ENCODE measurements at regions of chr4 and their contacts with region 1.

Region 1: DNA sequence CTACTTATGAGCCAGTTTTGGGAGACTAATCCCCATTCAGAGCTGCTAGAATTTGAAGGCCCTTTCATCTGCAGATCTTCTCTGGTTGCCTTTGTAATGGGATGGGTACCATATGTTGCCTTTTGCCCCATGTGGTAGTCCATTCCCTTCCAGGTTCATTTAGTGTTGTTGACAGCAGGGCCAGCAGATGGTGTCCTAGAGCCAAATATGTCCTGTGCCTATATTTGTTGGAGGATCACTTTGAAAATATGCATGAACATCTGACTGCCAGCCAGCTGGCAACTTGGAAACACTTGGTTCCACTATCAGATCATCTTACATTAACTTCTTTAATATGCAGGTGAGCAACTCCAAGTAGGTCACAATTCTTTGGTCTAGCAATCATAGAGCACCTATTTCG is 30.4 kb downstream of the CFAP299 start:
- DNase-seq: peak; percentile 37 to 40
- ATAC-seq: peak; percentile 62 to 95
- H3K4me3 ChIP-seq: no peak overlapping the region
- H3K27ac ChIP-seq: no peak overlapping the region
- H3K4me1 ChIP-seq: peaks cover 4 to 5% of the 10 kb centered on the region in 2 donors
- H3K27me3 ChIP-seq: no peaks in the 10 kb centered on the region
- CTCF ChIP-seq: peak in 3 of 5 experiments; percentile 16 to 47 (median 44)
- POLR2A ChIP-seq: no peak

Region 2: DNA sequence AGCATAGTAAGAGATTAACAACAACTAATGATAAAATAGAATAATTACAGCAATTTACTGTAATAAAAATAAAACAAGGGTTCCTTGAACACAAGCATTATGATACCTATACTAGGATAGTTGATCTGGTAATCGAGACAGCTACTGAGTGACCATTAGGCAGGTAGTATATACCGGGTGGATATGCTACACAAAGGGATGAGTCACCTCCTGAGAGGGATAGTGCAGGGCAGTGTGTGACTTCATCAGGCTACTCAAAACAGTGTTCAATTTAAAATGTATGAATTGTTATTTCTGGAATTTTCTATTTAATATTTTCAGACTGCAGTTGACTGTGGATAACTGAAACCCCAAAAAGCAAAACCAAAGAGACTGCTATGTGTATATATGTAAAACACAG is 283.2 kb before region 1 on chr4:
- in situ Hi-C with region 1: no loop called
- intact Hi-C with region 1: no loop called
- DNase-seq: no peak
- ATAC-seq: no peak
- H3K4me3 ChIP-seq: no peak overlapping the region
- H3K27ac ChIP-seq: no peak overlapping the region
- H3K4me1 ChIP-seq: no peaks in the 10 kb centered on the region
- H3K27me3 ChIP-seq: no peaks in the 10 kb centered on the region
- CTCF ChIP-seq: no peak
- POLR2A ChIP-seq: no peak

Region 3: DNA sequence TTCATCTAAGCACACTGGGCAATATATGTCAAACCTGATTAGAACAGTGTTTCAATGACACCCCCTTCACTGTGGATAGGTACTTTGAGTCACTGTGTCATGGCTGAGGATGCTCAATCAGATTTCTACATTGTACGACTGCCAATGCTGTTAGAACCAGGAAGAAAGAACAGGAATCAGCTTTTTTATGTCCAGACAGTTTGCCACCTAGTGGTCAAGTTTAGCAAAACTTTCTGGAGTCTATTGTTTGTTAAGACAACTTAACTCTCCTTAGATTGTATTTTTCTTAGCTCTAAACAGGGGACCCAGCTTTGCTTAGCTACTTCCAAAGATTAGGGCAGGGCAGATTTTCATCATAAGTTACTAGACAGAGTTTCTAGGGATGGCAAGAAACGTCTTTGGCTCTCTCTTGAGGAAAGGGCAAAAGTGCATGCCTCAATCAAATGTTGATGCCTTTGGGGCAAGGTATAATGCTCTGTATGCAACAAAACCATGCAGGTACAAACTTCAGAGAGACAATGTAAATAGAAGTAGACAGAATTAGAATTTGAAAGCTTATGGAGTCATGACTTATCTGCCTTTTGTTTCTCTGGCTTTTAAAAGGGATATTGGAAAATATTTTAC is 624.1 kb after region 1 on chr4:
- in situ Hi-C with region 1: loop called (anchors 5 to 25 kb)
- intact Hi-C with region 1: loop called (anchors 1 kb)
- DNase-seq: no peak
- ATAC-seq: peak in 1 of 2 donors; percentile 9
- H3K4me3 ChIP-seq: no peak overlapping the region
- H3K27ac ChIP-seq: no peak overlapping the region
- H3K4me1 ChIP-seq: no peaks in the 10 kb centered on the region
- H3K27me3 ChIP-seq: no peaks in the 10 kb centered on the region
- CTCF ChIP-seq: peak in 3 of 5 experiments; percentile 19 to 63 (median 54)
- POLR2A ChIP-seq: no peak

Region 4: DNA sequence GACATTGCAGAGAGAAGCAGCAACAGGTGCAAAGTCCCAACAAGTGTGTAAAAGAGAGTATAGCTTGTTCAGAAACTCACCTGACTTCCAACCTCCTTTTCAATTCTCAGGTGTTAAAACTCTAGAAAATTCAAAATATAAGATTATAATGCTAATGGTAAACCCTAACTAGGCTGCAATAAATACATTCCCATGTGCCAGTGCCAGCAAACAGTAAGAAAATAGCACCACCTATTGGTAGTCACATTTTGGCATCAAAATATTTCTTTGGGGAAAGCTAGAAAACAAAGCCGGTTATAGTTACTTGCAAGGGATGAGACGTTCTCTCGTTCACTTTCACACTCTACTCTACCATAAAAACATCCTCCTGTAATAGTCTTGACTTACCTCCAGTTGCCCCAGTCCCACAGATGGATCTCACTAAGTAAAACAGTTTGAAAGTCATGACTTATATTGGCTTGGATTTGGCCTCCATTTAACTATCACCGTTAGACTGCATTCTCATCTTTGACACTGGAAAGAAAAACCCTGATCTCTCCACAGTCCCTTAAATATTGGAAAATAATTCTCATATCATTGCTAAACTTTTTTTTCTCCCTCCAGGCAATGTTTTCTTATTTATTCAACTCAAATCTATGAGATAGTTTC is 674.2 kb after region 1 on chr4:
- in situ Hi-C with region 1: no loop called
- intact Hi-C with region 1: loop called (anchors 5 kb)
- DNase-seq: no peak
- ATAC-seq: no peak
- H3K4me3 ChIP-seq: no peak overlapping the region
- H3K27ac ChIP-seq: no peak overlapping the region
- H3K4me1 ChIP-seq: no peaks in the 10 kb centered on the region
- H3K27me3 ChIP-seq: peaks cover 0 to 5% (median 0%) of the 10 kb centered on the region in 3 donors
- CTCF ChIP-seq: peak in 2 of 5 experiments; percentile 36 to 40
- POLR2A ChIP-seq: no peak

Measured in gastrocnemius medialis (tissue), 4 donors.